Activated naive CD4-positive, alpha-beta T cell treated with anti-CD3 and anti-CD28 coated beads, Interleukin-2, amount 10 ng/mL, durations not matched to agents 7 days and 5 days (primary cell): ENCODE measurements at regions of chr12 and their contacts with region 1.

Region 1: DNA sequence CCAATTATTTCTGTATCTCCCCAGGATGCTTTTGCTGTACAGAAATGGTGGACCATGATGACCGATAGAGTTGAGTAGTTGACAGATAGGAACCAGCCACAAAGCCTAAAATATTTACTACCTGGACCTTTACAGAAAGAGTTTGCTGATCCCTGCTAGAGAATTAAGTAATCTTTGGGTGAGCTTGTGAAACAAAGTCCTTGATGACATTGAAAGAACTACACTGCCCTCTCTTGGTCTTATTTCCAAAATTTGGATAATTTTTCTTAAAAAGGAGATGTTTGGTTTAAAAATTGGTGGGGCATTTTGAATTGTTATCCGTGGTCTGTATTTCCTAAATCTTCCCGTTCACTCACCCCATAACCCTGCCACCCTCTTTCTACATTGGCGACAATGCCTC is 13.7 kb upstream of the TCTN1 start:
- DNase-seq: no peak
- H3K4me3 Mint-ChIP-seq: no peak overlapping the region
- H3K27ac Mint-ChIP-seq: no peak overlapping the region
- H3K4me1 Mint-ChIP-seq: peaks cover 14% of the 10 kb centered on the region
- H3K27me3 Mint-ChIP-seq: no peaks in the 10 kb centered on the region

Region 2: GRCh38 chr12:110449799-110450497 is 150.3 kb before region 1 on chr12 and contains the start of gene ARPC3:
- CTCF ChIA-PET with region 1: interaction called, 50 read pairs
- DNase-seq: peak; percentile 98
- H3K4me3 Mint-ChIP-seq: peak within 1 kb of the TSS; percentile 99
- H3K27ac Mint-ChIP-seq: peak within 1 kb of the TSS; percentile 99
- H3K4me1 Mint-ChIP-seq: peaks cover 51% of the 10 kb centered on the region
- H3K27me3 Mint-ChIP-seq: no peaks in the 10 kb centered on the region

Region 3: GRCh38 chr12:110508071-110508586 is 92.1 kb before region 1 on chr12:
- CTCF ChIA-PET with region 1: interaction called, 78 read pairs
- DNase-seq: no peak
- H3K4me3 Mint-ChIP-seq: no peak overlapping the region
- H3K27ac Mint-ChIP-seq: no peak overlapping the region
- H3K4me1 Mint-ChIP-seq: peaks cover 4% of the 10 kb centered on the region
- H3K27me3 Mint-ChIP-seq: peaks cover 8% of the 10 kb centered on the region

Region 4: GRCh38 chr12:110531741-110532333 is 68.4 kb before region 1 on chr12:
- CTCF ChIA-PET with region 1: interaction called, 17 read pairs
- DNase-seq: no peak
- H3K4me3 Mint-ChIP-seq: no peak overlapping the region
- H3K27ac Mint-ChIP-seq: no peak overlapping the region
- H3K4me1 Mint-ChIP-seq: peaks cover 9% of the 10 kb centered on the region
- H3K27me3 Mint-ChIP-seq: no peaks in the 10 kb centered on the region

Region 5: GRCh38 chr12:110555577-110556406 is 44.5 kb before region 1 on chr12:
- CTCF ChIA-PET with region 1: interaction called, 202 read pairs
- DNase-seq: no peak
- H3K4me3 Mint-ChIP-seq: no peak overlapping the region
- H3K27ac Mint-ChIP-seq: no peak overlapping the region
- H3K4me1 Mint-ChIP-seq: peaks cover 29% of the 10 kb centered on the region
- H3K27me3 Mint-ChIP-seq: no peaks in the 10 kb centered on the region

Region 6: GRCh38 chr12:110613771-110614684 is 13.8 kb after region 1 on chr12 and contains the start of gene TCTN1:
- CTCF ChIA-PET with region 1: interaction called, 26 read pairs
- DNase-seq: peak; percentile 99
- H3K4me3 Mint-ChIP-seq: peak within 1 kb of the TSS; percentile 81
- H3K27ac Mint-ChIP-seq: peak within 1 kb of the TSS; percentile 91
- H3K4me1 Mint-ChIP-seq: peaks cover 19% of the 10 kb centered on the region
- H3K27me3 Mint-ChIP-seq: no peaks in the 10 kb centered on the region

Region 7: DNA sequence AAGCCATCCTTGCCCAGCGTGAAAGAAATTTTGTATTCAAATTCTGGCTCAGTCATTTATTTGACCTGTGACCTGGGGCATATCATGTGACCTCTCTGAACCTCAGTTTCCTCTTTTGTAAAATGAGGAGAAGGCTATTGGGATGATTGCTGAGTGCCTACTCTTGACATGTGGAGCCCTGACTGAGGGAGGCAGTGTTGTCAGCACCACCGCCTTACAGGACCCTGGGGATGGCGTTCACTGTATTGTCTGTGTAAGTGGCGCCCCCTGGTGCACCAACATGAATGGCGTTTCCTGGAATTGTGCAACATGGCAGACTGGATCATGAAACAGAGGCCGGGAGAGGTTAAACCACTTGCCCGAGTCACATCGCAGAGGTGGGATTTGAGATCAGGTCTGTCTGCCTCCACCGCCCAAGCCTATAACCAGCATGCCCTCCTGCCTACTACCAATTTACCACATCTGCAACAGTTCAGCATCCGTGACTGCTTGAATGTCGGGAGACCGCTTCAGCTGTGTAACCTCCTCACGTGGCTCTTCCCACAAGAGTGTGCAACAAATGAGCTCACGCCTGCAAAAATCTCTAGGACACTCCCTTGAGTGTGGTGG is 226.4 kb after region 1 on chr12:
- CTCF ChIA-PET with region 1: interaction called, 14 read pairs
- DNase-seq: peak; percentile 92
- H3K4me3 Mint-ChIP-seq: no peak overlapping the region
- H3K27ac Mint-ChIP-seq: no peak overlapping the region
- H3K4me1 Mint-ChIP-seq: peaks cover 6% of the 10 kb centered on the region
- H3K27me3 Mint-ChIP-seq: peaks cover 33% of the 10 kb centered on the region